PC-3 (cell line): ENCODE measurements at regions of chr1 and their contacts with region 1.

Region 1: GRCh38 chr1:87328272-87329050 is at the start of gene LMO4:
- DNase-seq: peak; percentile 97
- ATAC-seq: peak; percentile 75
- H3K4me3 ChIP-seq: peak within 1 kb of the TSS; percentile 80
- H3K27ac ChIP-seq: peak within 1 kb of the TSS; percentile 43
- H3K4me1 ChIP-seq: peaks cover 25% of the 10 kb centered on the region
- H3K27me3 ChIP-seq: no peaks in the 10 kb centered on the region
- CTCF ChIP-seq: no peak
- total RNA-seq, gene LMO4: 35.7 and 41.5 TPM in 2 replicates

Region 2: DNA sequence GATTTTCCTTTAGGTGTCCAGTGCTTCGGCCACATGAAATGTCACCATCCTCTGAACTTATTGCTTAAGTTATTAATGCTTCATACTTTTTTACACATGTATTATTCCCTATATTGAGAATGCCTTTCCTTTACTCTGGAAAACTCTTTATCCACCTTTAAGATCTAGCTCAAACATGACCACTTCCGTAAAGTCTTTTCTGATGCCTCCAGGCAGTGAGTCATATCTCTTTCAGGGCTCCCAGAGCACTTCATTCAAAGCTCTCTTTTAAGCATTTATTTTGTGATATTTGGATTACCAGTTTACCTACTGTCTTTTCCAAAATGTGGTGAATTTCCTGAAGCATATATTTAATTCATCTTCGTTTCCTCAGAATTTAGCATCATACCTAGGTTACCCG is 235.2 kb before region 1 on chr1:
- CTCF ChIA-PET with region 1: interaction called, 12 read pairs
- POLR2A ChIA-PET with region 1: no interaction called
- intact Hi-C with region 1: no loop called
- DNase-seq: peak; percentile 88
- ATAC-seq: peak; percentile 99
- H3K4me3 ChIP-seq: no peak overlapping the region
- H3K27ac ChIP-seq: peak overlapping the region; percentile 42
- H3K4me1 ChIP-seq: peaks cover 26% of the 10 kb centered on the region
- H3K27me3 ChIP-seq: no peaks in the 10 kb centered on the region
- CTCF ChIP-seq: no peak

Region 3: DNA sequence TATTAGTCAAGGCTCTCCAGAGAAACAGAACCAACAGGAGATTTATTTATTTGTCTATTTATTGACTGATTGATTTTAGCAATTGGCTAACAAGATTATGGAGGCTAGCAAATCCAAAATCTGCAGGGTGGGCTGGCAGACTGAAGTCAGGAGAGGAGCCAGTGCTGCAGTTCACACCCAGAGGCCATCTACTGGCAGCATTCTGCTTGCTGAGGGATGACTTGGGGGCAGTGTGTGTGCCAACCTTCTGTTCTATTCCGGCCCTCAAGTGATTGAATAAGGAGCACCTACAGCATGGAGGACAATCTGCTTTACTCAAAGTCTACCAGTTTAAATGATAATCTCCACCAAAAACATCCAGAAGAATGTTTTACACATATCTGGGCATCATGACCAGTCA is 62.2 kb before region 1 on chr1:
- CTCF ChIA-PET with region 1: no interaction called
- POLR2A ChIA-PET with region 1: no interaction called
- intact Hi-C with region 1: no loop called
- DNase-seq: no peak
- ATAC-seq: no peak
- H3K4me3 ChIP-seq: no peak overlapping the region
- H3K27ac ChIP-seq: no peak overlapping the region
- H3K4me1 ChIP-seq: no peaks in the 10 kb centered on the region
- H3K27me3 ChIP-seq: no peaks in the 10 kb centered on the region
- CTCF ChIP-seq: peak; percentile 24; the same call in 1 of the 2 replicates

Region 4: GRCh38 chr1:87508247-87508787 is 179.9 kb after region 1 on chr1:
- CTCF ChIA-PET with region 1: no interaction called
- POLR2A ChIA-PET with region 1: no interaction called
- intact Hi-C with region 1: loop called (anchors 5 kb)
- DNase-seq: no peak
- ATAC-seq: peak; percentile 57
- H3K4me3 ChIP-seq: no peak overlapping the region
- H3K27ac ChIP-seq: no peak overlapping the region
- H3K4me1 ChIP-seq: no peaks in the 10 kb centered on the region; the same call in 1 of the 2 replicates
- H3K27me3 ChIP-seq: no peaks in the 10 kb centered on the region
- CTCF ChIP-seq: no peak

Region 5: DNA sequence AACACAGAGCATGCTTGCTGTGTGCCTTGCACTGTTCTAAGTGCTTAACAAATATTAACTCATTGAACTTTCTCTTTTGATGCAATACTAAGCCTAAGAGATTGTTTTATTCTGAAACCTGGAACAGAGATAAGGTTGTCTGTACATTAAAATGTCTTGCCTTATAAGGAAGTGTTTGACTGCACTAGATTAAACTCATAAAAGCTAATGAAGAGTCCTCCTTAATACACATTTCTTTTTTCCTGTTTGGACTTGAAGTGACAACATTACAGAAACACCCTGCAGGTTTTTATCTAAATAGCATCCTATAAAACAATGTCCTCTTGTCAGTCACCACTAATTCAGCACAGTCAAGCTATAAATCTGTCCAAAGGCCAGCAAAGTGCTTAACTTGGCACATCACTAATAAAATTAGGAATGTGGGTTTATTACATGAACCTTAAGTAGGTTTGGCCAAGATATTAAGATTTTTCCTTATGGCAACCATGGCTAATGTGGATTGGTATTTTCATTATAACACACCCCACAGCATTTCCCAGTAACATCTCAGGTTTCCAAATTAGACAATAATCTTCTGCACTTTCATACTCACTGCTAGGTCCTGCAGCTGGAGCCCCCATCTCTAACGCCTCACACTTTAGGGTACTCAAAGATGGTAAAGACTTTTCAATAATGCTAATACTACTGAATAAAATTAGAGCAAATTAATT is 389.9 kb after region 1 on chr1:
- CTCF ChIA-PET with region 1: no interaction called
- POLR2A ChIA-PET with region 1: no interaction called
- intact Hi-C with region 1: loop called (anchors 5 kb)
- DNase-seq: peak; percentile 38
- ATAC-seq: peak; percentile 72
- H3K4me3 ChIP-seq: no peak overlapping the region
- H3K27ac ChIP-seq: no peak overlapping the region
- H3K4me1 ChIP-seq: peaks cover 16% of the 10 kb centered on the region; the same call in 1 of the 2 replicates
- H3K27me3 ChIP-seq: no peaks in the 10 kb centered on the region
- CTCF ChIP-seq: no peak

Region 6: DNA sequence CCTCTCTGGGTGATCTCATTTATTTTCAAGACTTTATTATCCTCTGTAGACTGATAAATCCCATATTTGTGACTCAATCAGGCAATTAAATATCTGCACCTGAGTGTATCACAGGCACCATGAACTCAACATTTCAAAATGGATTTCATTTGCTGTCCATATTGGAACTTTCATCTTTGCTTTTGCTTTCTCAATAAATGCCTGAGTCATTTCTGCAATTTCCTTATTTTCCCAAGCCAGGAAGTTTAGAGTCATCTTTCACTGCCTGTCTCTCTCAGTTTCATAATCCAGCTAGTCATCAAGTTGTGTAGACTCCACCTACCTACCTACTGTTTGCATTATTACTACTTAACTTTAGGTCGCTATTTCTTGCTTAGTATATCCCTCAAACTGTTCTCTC is 541.1 kb after region 1 on chr1:
- CTCF ChIA-PET with region 1: no interaction called
- POLR2A ChIA-PET with region 1: no interaction called
- intact Hi-C with region 1: loop called (anchors 10 kb)
- DNase-seq: peak; percentile 91
- ATAC-seq: peak; percentile 97
- H3K4me3 ChIP-seq: 0 out of 2 replicates have a peak overlapping the region, but pooled peaks have one; percentile 17
- H3K27ac ChIP-seq: peak overlapping the region; percentile 91
- H3K4me1 ChIP-seq: peaks cover 29% of the 10 kb centered on the region
- H3K27me3 ChIP-seq: no peaks in the 10 kb centered on the region
- CTCF ChIP-seq: no peak

Region 7: GRCh38 chr1:88302843-88303486 is 974.5 kb after region 1 on chr1:
- CTCF ChIA-PET with region 1: no interaction called
- POLR2A ChIA-PET with region 1: no interaction called
- intact Hi-C with region 1: loop called (anchors 10 kb)
- DNase-seq: peak; percentile 51
- ATAC-seq: peak; percentile 62; the same call in 1 of the 2 replicates
- H3K4me3 ChIP-seq: no peak overlapping the region
- H3K27ac ChIP-seq: no peak overlapping the region
- H3K4me1 ChIP-seq: no peaks in the 10 kb centered on the region
- H3K27me3 ChIP-seq: no peaks in the 10 kb centered on the region
- CTCF ChIP-seq: peak; percentile 65